Activated CD8-positive, alpha-beta T cell treated with anti-CD3 and anti-CD28 coated beads, Interleukin-2, amount 10 ng/mL, durations not matched to agents 7 days and 5 days (primary cell): ENCODE measurements at regions of chr5 and their contacts with region 1.

Region 1: DNA sequence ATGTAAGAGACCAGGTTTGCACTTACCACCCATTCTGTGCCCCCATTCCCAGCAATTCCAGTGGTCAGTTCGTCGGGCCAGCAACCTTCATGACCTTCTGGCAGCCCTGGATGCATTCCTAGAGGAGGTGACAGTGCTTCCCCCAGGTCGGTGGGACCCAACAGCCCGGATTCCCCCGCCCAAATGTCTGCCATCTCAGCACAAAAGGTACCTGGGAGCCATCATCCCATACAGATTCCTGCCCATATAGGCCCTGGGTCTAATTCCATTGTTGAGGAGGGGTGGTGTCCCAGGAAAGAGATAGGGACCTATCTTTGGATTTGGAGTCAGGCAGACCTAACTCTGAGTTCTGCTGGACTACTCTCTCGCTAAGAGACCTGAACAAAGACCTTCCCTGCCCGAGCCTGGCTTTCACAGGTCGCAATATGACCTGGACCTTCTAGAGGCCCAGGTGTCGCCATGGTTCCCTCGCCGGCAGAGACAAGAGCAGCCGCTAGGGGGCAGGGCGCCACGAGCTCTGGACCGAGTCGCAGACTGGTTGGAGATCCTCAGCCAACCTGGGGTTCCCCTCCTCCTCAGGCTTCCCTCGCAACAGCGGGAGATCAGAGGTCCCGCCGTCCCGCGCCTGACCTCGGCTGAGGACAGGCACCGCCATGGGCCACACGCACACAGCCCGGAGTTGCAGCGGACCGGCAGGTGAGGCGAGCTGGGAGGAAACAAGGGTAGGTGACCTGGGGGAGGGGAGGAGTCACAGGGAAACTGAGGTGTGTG is 3.1 kb downstream of the SLC4A9 start:
- DNase-seq: peak; percentile 89
- ATAC-seq: peak; percentile 94
- H3K4me3 Mint-ChIP-seq: peak overlapping the region; percentile 71
- H3K27ac Mint-ChIP-seq: peak overlapping the region; percentile 54
- H3K4me1 Mint-ChIP-seq: peaks cover 11% of the 10 kb centered on the region
- H3K27me3 Mint-ChIP-seq: peaks cover 7% of the 10 kb centered on the region

Region 2: GRCh38 chr5:140196115-140196814 is 166.8 kb before region 1 on chr5:
- CTCF ChIA-PET with region 1: no interaction called
- POLR2A ChIA-PET with region 1: no interaction called
- DNase-seq: no peak
- ATAC-seq: no peak
- H3K4me3 Mint-ChIP-seq: no peak overlapping the region
- H3K27ac Mint-ChIP-seq: no peak overlapping the region
- H3K4me1 Mint-ChIP-seq: no peaks in the 10 kb centered on the region
- H3K27me3 Mint-ChIP-seq: no peaks in the 10 kb centered on the region

Region 3: GRCh38 chr5:140261403-140262171 is 101.5 kb before region 1 on chr5:
- CTCF ChIA-PET with region 1: interaction called, 11 read pairs
- POLR2A ChIA-PET with region 1: no interaction called
- DNase-seq: no peak
- ATAC-seq: peak; percentile 60
- H3K4me3 Mint-ChIP-seq: no peak overlapping the region
- H3K27ac Mint-ChIP-seq: no peak overlapping the region
- H3K4me1 Mint-ChIP-seq: peaks cover 61% of the 10 kb centered on the region
- H3K27me3 Mint-ChIP-seq: no peaks in the 10 kb centered on the region

Region 4: GRCh38 chr5:140388052-140388451 is 25.0 kb after region 1 on chr5:
- CTCF ChIA-PET with region 1: interaction called, 12 read pairs
- POLR2A ChIA-PET with region 1: no interaction called
- DNase-seq: no peak
- ATAC-seq: no peak
- H3K4me3 Mint-ChIP-seq: no peak overlapping the region
- H3K27ac Mint-ChIP-seq: no peak overlapping the region
- H3K4me1 Mint-ChIP-seq: peaks cover 9% of the 10 kb centered on the region
- H3K27me3 Mint-ChIP-seq: no peaks in the 10 kb centered on the region

Region 5: DNA sequence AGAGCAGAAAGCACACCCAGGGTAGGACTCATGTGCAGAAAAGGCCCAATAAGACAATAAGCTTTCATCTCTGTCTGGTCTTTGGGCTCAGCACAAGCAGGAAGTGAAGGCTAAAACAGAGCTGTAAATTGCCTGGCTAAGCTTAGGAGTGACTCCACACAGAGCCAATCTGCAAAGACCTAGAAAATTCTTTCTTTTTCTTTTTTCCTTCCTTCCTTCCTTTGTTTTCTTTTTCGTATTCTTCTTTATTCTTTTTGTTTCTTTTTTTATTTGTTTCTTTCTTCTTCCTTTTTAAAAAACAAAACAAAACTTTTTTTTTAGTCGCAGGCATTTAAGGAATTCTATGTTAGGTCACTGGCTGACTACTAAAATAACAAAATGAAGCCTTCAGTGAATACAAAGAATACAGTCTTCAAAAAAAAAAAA is 213.7 kb after region 1 on chr5:
- CTCF ChIA-PET with region 1: no interaction called
- POLR2A ChIA-PET with region 1: no interaction called
- DNase-seq: no peak
- ATAC-seq: peak; percentile 79
- H3K4me3 Mint-ChIP-seq: no peak overlapping the region
- H3K27ac Mint-ChIP-seq: no peak overlapping the region
- H3K4me1 Mint-ChIP-seq: peaks cover 9% of the 10 kb centered on the region
- H3K27me3 Mint-ChIP-seq: peaks cover 12% of the 10 kb centered on the region

Region 6: GRCh38 chr5:140718241-140718580 is 355.2 kb after region 1 on chr5:
- CTCF ChIA-PET with region 1: interaction called, 15 read pairs
- POLR2A ChIA-PET with region 1: no interaction called
- DNase-seq: no peak
- ATAC-seq: no peak
- H3K4me3 Mint-ChIP-seq: no peak overlapping the region
- H3K27ac Mint-ChIP-seq: no peak overlapping the region
- H3K4me1 Mint-ChIP-seq: peaks cover 2% of the 10 kb centered on the region
- H3K27me3 Mint-ChIP-seq: peaks cover 16% of the 10 kb centered on the region